Activated T-helper 1 cell treated with anti-CD3 and anti-CD28 coated beads, Interleukin-12 subunit alpha, Interleukin-12 subunit beta, Interleukin-2, Interleukin-4 antibody, amounts not matched to agents 30 ng/mL and 10 ng/mL and 1 ng/mL, durations not matched to agents 14 hours and 24 hours and 36 hours (primary cell): ENCODE measurements at regions of chr1 and their contacts with region 1.

Region 1: DNA sequence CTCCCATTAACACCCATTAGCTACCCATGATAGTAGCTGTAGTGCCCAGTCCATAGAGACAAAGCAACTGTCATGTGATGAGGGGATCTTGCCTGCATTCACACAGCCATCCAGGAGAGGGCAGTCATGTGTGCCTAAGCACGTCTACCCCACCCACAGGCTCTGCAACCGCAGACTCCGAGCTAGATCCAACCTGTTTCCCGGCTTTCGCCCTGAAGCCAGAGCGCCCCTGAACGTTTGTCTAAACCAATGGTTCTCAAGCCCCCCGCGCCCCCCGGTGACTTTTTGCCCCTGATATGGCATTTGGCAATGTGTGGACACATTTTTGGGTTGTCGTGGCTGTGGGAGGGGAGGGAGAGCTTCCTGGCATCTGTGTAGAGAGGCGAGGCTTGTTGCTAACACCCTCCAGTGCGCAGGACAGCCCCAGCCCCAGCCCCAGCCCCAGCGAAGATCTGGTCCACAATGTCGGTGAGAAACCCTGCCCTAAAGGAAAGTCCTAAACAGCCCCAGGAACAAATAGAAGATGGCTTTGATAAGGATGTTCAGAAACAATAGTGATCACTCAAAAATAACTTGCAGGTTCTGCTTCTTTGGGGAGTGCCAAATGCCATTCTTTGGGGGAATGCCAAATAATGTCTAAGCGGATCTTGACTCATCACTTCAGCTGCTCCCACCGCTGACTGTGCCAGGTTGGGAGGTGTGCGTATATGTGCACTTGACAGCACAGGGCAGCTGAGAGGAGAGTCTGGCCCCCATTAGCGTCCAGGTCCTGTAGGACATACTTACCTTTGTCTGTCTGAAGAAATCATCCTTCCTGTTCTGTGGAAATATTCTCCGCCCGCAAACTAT is 34.5 kb downstream of the SLC44A3 start:
- DNase-seq: peak; percentile 73
- H3K4me3 Mint-ChIP-seq: no peak overlapping the region
- H3K27ac Mint-ChIP-seq: no peak overlapping the region
- H3K4me1 Mint-ChIP-seq: no peaks in the 10 kb centered on the region
- H3K27me3 Mint-ChIP-seq: peaks cover 2% of the 10 kb centered on the region

Region 2: GRCh38 chr1:94883691-94884090 is 29.0 kb after region 1 on chr1:
- intact Hi-C with region 1: loop called (anchors 2 kb)
- DNase-seq: no peak
- H3K4me3 Mint-ChIP-seq: peak overlapping the region; percentile 15
- H3K27ac Mint-ChIP-seq: peak overlapping the region; percentile 15
- H3K4me1 Mint-ChIP-seq: peaks cover 14% of the 10 kb centered on the region
- H3K27me3 Mint-ChIP-seq: no peaks in the 10 kb centered on the region

Region 3: GRCh38 chr1:94955767-94956632 is 101.3 kb after region 1 on chr1:
- intact Hi-C with region 1: no loop called
- DNase-seq: no peak
- H3K4me3 Mint-ChIP-seq: no peak overlapping the region
- H3K27ac Mint-ChIP-seq: no peak overlapping the region
- H3K4me1 Mint-ChIP-seq: no peaks in the 10 kb centered on the region
- H3K27me3 Mint-ChIP-seq: no peaks in the 10 kb centered on the region